WTC11 (cell line): ENCODE measurements at regions of chr11 and their contacts with region 1.

Region 1: GRCh38 chr11:17730608-17731462 is 3.7 kb upstream of the KCNC1 start:
- DNase-seq: peak; percentile 90
- ATAC-seq: peak; percentile 77
- H3K4me3 Mint-ChIP-seq: no peak overlapping the region
- H3K27ac Mint-ChIP-seq: no peak overlapping the region
- H3K4me1 Mint-ChIP-seq: peaks cover 3% of the 10 kb centered on the region; the same call in 1 of the 2 replicates
- H3K27me3 Mint-ChIP-seq: peaks cover 54% of the 10 kb centered on the region
- CTCF ChIP-seq: peak; percentile 41

Region 2: GRCh38 chr11:17598700-17599459 is 132.0 kb before region 1 on chr11:
- CTCF ChIA-PET with region 1: interaction called, 66 read pairs
- POLR2A ChIA-PET with region 1: no interaction called
- DNase-seq: peak; percentile 94
- ATAC-seq: peak; percentile 95
- H3K4me3 Mint-ChIP-seq: no peak overlapping the region
- H3K27ac Mint-ChIP-seq: no peak overlapping the region
- H3K4me1 Mint-ChIP-seq: peaks cover 6% of the 10 kb centered on the region
- H3K27me3 Mint-ChIP-seq: peaks cover 7% of the 10 kb centered on the region
- CTCF ChIP-seq: peak; percentile 95

Region 3: GRCh38 chr11:17743808-17744119 is 12.9 kb after region 1 on chr11:
- CTCF ChIA-PET with region 1: interaction called, 28 read pairs
- POLR2A ChIA-PET with region 1: no interaction called
- DNase-seq: no peak
- ATAC-seq: no peak
- H3K4me3 Mint-ChIP-seq: no peak overlapping the region
- H3K27ac Mint-ChIP-seq: no peak overlapping the region
- H3K4me1 Mint-ChIP-seq: no peaks in the 10 kb centered on the region
- H3K27me3 Mint-ChIP-seq: no peaks in the 10 kb centered on the region; the same call in 1 of the 2 replicates
- CTCF ChIP-seq: no peak

Region 4: DNA sequence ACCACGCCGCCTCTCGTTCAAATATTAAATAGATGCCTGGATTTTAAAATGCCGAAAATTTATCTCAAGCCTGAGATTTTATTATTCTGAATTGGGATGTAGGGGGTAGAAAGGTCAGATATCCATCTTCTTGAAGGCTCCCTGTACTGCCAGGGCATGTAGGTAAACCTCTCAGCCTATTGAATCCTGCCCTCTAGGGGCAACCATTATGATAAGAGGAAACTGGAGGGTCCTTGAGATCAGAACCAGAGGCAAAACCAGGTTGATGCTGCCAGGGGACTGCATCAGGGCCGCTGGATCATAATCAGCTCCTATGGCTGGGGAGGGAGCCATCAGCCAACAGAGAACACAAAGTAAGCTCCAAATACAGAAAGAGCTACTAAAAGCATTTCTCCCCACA is 96.2 kb after region 1 on chr11:
- CTCF ChIA-PET with region 1: interaction called, 22 read pairs
- POLR2A ChIA-PET with region 1: no interaction called
- DNase-seq: no peak
- ATAC-seq: peak; percentile 92
- H3K4me3 Mint-ChIP-seq: no peak overlapping the region
- H3K27ac Mint-ChIP-seq: no peak overlapping the region
- H3K4me1 Mint-ChIP-seq: peaks cover 8% of the 10 kb centered on the region
- H3K27me3 Mint-ChIP-seq: no peaks in the 10 kb centered on the region; the same call in 1 of the 2 replicates
- CTCF ChIP-seq: no peak

Region 5: GRCh38 chr11:17927681-17928347 is 197.0 kb after region 1 on chr11:
- CTCF ChIA-PET with region 1: interaction called, 23 read pairs
- POLR2A ChIA-PET with region 1: no interaction called
- DNase-seq: no peak
- ATAC-seq: no peak
- H3K4me3 Mint-ChIP-seq: no peak overlapping the region
- H3K27ac Mint-ChIP-seq: peak overlapping the region; percentile 30; the same call in 1 of the 2 replicates
- H3K4me1 Mint-ChIP-seq: peaks cover 28% of the 10 kb centered on the region
- H3K27me3 Mint-ChIP-seq: no peaks in the 10 kb centered on the region
- CTCF ChIP-seq: no peak